ENCODE measurements at regions of chr10 and their contacts with region 1.

Region 1: DNA sequence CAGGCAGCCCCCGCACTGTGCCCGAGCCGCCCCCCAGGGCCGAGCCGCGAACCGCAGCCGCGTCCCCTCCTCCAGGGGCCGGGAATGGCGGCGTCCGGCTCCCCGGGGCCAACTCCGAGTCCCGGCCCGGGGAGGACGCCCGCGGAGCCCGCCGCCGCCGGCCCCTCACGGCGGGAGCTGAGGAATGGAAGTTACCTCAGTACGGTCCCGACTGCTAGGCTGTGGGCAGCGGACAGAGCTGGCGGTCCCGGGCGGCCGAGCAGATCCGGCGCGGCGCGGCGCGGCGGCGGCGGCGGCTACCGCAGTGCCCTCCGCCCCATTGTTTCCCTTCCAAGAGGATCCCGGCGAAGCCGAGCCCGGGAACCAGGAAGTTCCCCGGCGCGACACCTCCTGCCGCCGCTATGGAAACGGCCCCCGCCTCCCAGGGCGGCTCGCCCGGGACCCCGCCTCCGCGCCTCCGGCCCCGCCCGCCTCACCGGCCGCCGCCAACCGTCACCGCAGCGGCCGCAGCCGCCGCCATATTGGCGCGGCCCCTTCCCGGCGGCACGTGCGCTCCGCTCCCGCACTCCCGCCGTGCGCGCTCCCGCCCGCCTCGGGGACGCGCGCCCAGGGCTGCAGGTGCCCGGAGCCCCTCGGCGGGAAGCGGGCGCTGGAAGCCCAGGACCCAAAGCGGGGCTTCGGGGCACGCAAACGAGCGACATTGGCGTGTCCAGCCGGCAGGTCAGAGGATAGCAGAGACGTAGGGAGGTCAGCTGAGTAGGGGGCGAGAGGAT is at the start of gene USP6NL:
- DNase-seq: peak; percentile 61 to 90 (median 72)
- H3K4me3 ChIP-seq: peak within 1 kb of the TSS; percentile 60 to 91 (median 78)
- H3K27ac ChIP-seq: peak within 1 kb of the TSS; percentile 19 to 93 (median 80)
- H3K27me3 ChIP-seq: no peaks in the 10 kb centered on the region
- CTCF ChIP-seq: peak in 6 of 56 donors; percentile 5 to 35 (median 17)
- total RNA-seq, gene USP6NL: 7.9 to 16.3 (median 11.9) TPM

Region 2: DNA sequence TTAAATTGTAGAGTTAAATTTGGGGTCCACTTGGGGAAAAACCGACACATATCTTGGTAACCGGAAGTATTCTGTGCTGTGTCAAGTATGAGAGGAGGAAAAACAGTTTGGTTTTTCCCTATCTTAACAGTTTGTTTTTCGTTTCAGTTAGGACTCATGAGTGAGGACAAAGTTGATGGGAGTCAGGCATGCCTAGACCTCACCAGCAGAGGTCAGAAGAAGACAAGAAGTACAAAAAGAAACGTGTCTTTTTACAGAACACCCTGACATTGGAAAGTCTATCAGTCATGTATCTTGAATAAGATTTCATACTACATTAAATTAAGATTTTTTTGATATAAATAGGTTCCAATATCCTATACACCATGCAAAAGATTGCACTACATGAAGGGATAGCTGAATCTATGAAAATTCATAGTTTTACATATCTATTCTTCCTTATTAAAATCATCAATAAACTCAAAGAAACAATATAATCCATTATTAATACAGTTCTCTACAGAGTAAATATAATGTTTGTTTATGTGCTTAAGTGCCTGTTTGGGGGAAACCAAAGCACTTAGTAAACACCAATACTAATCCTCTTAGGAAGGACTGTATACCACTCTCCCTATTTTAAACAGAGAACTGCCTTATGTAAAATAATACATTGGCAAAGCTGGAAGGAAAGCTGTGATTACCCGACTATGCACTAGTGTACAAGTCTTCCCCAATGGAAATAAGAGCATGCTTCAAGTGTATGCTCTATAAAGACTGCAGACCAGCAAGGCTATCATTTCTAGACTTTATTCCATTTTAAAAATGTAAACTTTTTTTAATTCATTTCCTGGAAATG is 95.6 kb before region 1 on chr10:
- intact Hi-C with region 1: loop called in 1 of 2 experiments (anchors 5 kb)
- DNase-seq: peak in 3 of 10 donors; percentile 38 to 57 (median 56)
- H3K4me3 ChIP-seq: no peak overlapping the region
- H3K27ac ChIP-seq: no peak overlapping the region
- H3K27me3 ChIP-seq: no peaks in the 10 kb centered on the region
- CTCF ChIP-seq: peak; percentile 60 to 98 (median 90)

Region 3: GRCh38 chr10:11539191-11539868 is 72.1 kb before region 1 on chr10:
- intact Hi-C with region 1: loop called in 1 of 2 experiments (anchors 5 kb)
- DNase-seq: no peak
- H3K4me3 ChIP-seq: no peak overlapping the region
- H3K27ac ChIP-seq: no peak overlapping the region
- H3K27me3 ChIP-seq: no peaks in the 10 kb centered on the region
- CTCF ChIP-seq: no peak

Region 4: DNA sequence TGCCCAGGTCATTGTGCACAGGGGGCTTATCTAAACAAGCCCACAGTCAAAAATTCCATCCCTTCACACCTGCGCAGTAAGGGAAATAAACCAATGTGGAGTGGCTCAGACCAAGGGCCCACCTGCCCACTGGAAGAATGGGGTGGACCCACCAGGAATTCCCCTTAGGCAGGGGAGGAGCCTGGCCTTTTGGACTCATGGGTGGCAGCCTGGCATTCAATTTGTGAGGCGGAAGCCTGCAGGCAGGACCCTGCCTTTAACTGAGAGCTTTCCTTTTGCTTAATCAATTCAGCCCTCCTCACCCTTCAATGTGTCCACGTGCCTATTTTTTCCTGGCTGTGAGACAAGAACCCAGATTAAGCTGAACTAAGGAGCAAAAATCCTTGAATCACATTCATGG is 63.0 kb after region 1 on chr10:
- intact Hi-C with region 1: no loop called
- DNase-seq: no peak
- H3K4me3 ChIP-seq: no peak overlapping the region
- H3K27ac ChIP-seq: peak overlapping the region in 5 of 59 donors; percentile 12 to 23 (median 22)
- H3K27me3 ChIP-seq: no peaks in the 10 kb centered on the region
- CTCF ChIP-seq: no peak

Region 5: DNA sequence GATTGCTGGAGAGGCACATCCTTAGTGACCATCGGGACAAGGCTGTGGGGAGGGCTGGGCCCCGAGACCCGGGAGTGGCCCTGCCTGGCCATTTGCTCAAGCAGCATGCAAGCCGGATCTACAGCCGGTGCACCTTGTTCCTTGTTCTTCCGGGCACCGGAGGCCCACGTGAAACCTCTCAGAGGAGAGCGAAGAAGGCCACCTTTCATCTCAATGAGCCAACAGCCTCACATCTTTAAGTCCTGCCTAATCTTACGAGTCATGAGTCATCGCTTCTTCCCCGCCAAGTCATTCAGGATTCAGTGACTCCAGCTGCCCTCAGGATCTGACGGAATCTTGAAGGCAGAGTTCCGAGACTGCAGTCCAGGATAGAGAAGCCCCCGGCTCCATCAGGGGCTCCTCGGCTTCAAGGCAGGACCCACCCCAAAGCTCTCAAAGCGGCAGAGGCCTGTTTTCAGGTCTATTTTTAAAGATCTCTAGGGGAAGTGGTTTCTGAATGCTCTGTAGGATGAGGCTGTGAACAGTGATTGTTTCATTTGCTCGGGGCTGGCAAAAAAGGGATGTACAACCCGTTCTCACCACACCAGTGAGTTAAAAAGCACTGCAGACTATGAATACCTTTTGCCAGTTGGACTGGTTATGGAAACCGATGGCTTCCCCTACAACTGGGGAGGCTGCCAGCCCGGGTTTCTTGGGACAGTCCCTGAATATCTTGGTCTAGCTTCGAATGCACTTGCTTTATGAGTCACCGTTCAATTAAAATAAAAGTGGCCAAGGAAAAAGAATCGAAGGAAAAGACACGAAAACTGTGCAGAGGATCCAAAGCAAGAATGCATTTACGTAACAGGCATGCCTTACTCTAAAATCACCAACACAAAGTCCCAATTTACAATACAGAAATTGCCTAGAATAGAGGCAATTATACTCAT is 73.5 kb after region 1 on chr10:
- intact Hi-C with region 1: loop called in 1 of 2 experiments (anchors 10 kb)
- DNase-seq: peak; percentile 37 to 91 (median 71)
- H3K4me3 ChIP-seq: peak overlapping the region in 52 of 59 donors; percentile 0 to 57 (median 33)
- H3K27ac ChIP-seq: peak overlapping the region in 55 of 59 donors; percentile 6 to 89 (median 71)
- H3K27me3 ChIP-seq: no peaks in the 10 kb centered on the region
- CTCF ChIP-seq: no peak

Region 6: DNA sequence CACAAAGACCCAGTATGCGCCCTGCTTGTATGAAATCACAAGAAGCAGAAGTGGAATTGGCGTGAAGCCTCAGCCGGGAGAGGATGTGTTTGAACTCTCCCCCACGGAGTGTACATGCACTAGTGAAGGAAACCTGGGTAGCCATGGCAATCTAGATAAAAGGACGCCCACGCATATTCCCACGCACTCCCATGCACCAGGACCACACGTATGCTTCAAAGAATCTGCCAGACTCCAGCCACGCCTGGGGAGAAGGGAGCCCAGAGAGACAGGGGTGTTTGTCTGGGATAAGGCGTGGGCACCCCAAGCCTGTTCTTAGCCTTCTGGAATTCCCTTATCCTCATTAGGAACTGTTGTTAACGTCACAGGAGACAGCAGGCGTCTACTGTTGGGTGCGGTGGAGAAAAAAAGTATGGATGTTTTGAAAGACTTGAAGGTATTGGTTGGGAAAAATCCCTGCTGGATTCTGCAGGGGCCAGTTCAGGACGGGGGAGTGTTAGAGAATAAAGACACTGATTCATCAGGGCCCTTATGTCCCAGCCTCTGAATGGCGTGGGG is 101.8 kb after region 1 on chr10:
- intact Hi-C with region 1: loop called in 1 of 2 experiments (anchors 10 kb)
- DNase-seq: no peak
- H3K4me3 ChIP-seq: peak overlapping the region in 10 of 59 donors; percentile 4 to 46 (median 32)
- H3K27ac ChIP-seq: no peak overlapping the region
- H3K27me3 ChIP-seq: peaks cover 0 to 6% (median 0%) of the 10 kb centered on the region in 45 donors
- CTCF ChIP-seq: no peak

Region 7: GRCh38 chr10:11724938-11725776 is 113.7 kb after region 1 on chr10:
- intact Hi-C with region 1: loop called in 1 of 2 experiments (anchors 10 kb)
- DNase-seq: no peak
- H3K4me3 ChIP-seq: peak overlapping the region in 1 of 59 donors; percentile 14
- H3K27ac ChIP-seq: no peak overlapping the region
- H3K27me3 ChIP-seq: no peaks in the 10 kb centered on the region
- CTCF ChIP-seq: peak; percentile 37 to 89 (median 75)

Region 8: GRCh38 chr10:12445701-12446334 is 834.4 kb after region 1 on chr10:
- intact Hi-C with region 1: no loop called
- DNase-seq: no peak
- H3K4me3 ChIP-seq: no peak overlapping the region
- H3K27ac ChIP-seq: peak overlapping the region in 1 of 59 donors; percentile 5
- H3K27me3 ChIP-seq: no peaks in the 10 kb centered on the region
- CTCF ChIP-seq: no peak